GM10248 (cell line): ENCODE measurements at regions of chr6 and their contacts with region 1.

Region 1: GRCh38 chr6:121849477-121849876 is 414.0 kb downstream of the GJA1 start:
- DNase-seq: peak; percentile 42
- CTCF ChIP-seq: peak; percentile 75

Region 2: DNA sequence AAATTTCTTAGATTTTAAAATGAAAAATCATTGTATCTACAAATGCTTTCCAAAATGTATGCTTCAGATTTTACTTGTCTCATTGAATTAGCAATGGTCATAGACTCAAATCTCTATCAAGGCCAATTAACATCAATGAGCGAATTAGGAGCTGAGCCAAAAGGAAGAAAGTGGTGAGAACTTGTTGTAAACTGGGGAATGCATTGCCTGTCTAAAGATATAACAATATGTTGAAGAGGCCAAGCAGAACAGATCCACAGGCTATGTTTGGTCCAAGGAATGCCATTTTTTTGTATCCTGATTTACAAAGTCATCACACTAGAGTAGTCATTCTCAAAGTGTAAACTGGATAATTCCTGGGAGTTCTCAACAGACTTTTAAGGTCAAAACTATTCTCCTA is 43.4 kb before region 1 on chr6:
- CTCF ChIA-PET with region 1: no interaction called
- POLR2A ChIA-PET with region 1: no interaction called
- DNase-seq: no peak
- CTCF ChIP-seq: no peak

Region 3: DNA sequence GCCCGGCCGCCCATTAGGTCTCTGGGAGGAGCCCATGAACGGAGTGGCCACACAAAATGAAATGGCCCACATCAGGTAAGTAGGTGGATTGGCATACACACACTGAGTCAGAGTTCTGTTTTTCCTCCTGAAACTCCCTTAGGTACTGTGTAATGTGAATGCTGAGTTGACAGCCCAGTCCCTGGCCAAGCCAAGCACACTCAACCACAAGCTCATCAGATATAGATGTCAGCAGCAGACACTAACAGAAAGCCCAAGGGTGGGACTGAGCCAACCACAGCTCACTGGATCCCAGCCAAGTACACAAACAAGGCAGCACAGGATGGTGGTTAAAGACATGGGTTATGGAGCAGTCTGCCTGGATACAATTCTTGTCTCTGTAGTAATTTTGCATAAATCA is 10.6 kb before region 1 on chr6:
- CTCF ChIA-PET with region 1: interaction called, 24 read pairs
- POLR2A ChIA-PET with region 1: no interaction called
- DNase-seq: no peak
- CTCF ChIP-seq: no peak

Region 4: DNA sequence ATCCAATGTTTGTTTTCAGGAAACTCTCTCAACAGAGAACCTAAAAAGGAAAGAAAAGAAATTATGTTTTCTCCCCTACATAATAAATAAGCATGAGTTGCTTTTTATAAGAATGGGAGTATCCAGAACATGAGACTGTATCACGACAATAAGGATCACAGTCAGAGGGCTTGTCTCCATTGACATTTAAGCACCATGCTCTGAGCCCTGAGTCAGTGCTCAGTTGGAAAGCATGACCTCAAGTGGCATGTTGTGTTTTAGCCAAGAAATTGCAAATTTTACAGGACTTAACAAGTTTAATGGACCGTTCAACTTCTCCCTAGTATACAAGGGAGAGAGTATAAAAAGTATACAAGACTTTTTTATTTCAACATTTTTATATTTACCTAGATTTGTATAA is 17.6 kb after region 1 on chr6:
- CTCF ChIA-PET with region 1: interaction called, 10 read pairs
- POLR2A ChIA-PET with region 1: no interaction called
- DNase-seq: no peak
- CTCF ChIP-seq: no peak